HepG2 (cell line): ENCODE measurements at regions of chr16 and their contacts with region 1.

Region 1: DNA sequence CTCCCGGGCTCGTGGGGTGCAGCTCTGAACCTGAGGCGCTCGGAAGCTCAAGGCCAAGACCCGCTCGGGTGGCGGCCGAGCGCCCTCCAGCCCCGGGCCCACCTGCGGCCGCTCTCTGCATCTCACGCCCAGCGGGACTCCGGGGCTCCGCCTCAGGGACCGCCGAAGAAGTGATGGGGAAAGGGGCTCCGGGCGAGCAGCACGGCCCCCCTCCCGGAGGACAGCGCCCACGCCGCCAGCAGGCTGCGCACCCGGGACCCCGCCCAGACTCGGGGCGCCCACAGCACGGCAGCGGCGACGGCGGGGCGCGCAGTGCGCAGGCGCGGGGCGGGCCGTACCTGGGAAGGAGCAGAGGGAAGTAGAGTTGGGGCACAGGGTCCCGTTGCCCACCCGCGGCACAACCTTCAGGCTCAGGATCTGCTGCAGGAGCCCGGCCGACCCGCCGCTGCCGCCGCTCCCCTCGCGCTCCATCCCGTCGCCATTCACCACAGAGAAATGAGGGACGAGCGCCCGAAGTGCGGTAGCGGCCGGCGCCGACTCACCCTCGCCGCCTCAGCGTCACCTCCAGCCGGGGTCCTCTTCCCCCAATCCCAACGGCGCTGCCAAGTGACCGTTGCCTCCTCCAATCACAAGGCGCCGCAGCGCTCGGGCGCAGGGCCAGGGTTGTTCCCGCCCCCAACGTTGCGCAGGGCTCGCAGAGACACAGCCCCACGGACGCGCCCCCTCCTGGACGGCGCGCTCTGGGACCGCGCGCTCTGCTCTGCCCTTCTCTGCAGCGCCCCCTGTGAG is at the start of gene TMEM170A:
- DNase-seq: peak; percentile 98
- ATAC-seq: peak; percentile 94
- H3K4me3 ChIP-seq: peak within 1 kb of the TSS; percentile 86 to 91 (median 91)
- H3K27ac ChIP-seq: peak within 1 kb of the TSS; percentile 80
- H3K4me1 ChIP-seq: peaks cover 66% of the 10 kb centered on the region
- H3K27me3 ChIP-seq: no peaks in the 10 kb centered on the region
- CTCF ChIP-seq: peak; percentile 100
- EP300 ChIP-seq: peak; percentile 20 to 46; a peak in 2 of 4 replicates
- POLR2A ChIP-seq: peak; percentile 96 to 98
- RAD21 ChIP-seq: peak; percentile 96
- total RNA-seq, gene TMEM170A: 39.7 and 44.7 TPM in 2 replicates

Region 2: GRCh38 chr16:74695450-74696422 is 768.6 kb before region 1 on chr16:
- CTCF ChIA-PET with region 1: no interaction called
- POLR2A ChIA-PET with region 1: no interaction called
- in situ Hi-C with region 1: no loop called
- intact Hi-C with region 1: loop called (anchors 5 kb)
- DNase-seq: peak; percentile 96
- ATAC-seq: peak; percentile 95
- H3K4me3 ChIP-seq: peak overlapping the region; percentile 50 to 70 (median 55)
- H3K27ac ChIP-seq: peak overlapping the region; percentile 11
- H3K4me1 ChIP-seq: peaks cover 26% of the 10 kb centered on the region
- H3K27me3 ChIP-seq: no peaks in the 10 kb centered on the region; a peak in 1 of 5 replicates
- CTCF ChIP-seq: no peak
- EP300 ChIP-seq: no peak; a peak in 1 of 4 replicates
- POLR2A ChIP-seq: peak; percentile 81 to 96
- RAD21 ChIP-seq: peak; percentile 9; the same call in 1 of the 2 replicates

Region 3: GRCh38 chr16:75198135-75198600 is 266.2 kb before region 1 on chr16:
- CTCF ChIA-PET with region 1: interaction called, 32 read pairs
- POLR2A ChIA-PET with region 1: no interaction called
- in situ Hi-C with region 1: no loop called
- intact Hi-C with region 1: loop called (anchors 1 kb)
- DNase-seq: no peak
- ATAC-seq: peak; percentile 9; the same call in 1 of the 3 replicates
- H3K4me3 ChIP-seq: peak overlapping the region; percentile 5 to 64 (median 34); a peak in 4 of 6 replicates
- H3K27ac ChIP-seq: no peak overlapping the region
- H3K4me1 ChIP-seq: peaks cover 23% of the 10 kb centered on the region
- H3K27me3 ChIP-seq: peaks cover 11 to 51% of the 10 kb centered on the region in 2 experiments
- CTCF ChIP-seq: no peak
- EP300 ChIP-seq: no peak
- POLR2A ChIP-seq: no peak
- RAD21 ChIP-seq: no peak

Region 4: DNA sequence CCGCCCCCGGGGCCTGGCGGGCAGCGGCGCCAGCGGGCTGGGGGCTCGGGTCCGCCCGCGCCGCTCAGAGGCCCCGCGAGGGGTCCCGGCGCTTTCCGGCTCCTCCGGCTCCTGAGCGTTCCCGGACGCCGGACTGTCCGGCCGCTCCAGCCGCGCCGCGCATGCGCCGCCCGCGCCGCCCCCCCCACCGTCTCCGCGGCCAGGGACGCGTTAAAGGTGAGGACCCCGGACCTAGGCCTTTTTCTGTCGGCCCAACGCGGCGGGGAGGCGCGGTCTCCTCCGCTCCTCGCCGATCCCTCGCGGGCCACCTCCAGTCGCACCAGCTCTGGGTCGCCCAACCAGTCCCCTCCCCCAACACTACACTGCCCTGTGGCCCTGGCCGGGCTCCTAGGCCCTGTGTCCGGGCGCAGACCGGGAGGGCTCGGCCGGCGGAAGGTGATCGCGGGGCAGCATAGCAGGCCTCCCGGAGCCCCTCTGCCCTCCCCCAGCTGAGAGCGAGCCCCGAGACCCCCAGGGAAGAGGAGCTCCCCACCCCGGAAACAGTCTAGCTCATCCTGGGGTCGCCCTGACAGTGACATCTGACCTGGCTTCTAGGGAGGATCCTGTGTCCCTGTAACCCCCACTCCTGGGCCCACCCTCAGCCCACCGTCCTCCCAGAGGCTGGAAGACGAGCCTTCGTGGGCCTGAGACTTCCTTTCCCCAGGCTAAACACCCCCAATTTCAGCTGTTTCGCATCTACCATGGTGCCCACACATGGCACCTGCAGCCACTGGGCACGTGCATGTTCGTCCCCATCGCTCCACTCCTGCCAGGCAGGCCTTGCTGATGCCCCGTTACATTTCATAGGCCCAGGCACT is 198.3 kb before region 1 on chr16:
- CTCF ChIA-PET with region 1: no interaction called
- POLR2A ChIA-PET with region 1: no interaction called
- in situ Hi-C with region 1: no loop called
- intact Hi-C with region 1: loop called (anchors 5 kb)
- DNase-seq: peak; percentile 84
- ATAC-seq: peak; percentile 30
- H3K4me3 ChIP-seq: peak overlapping the region; percentile 92 to 99 (median 96)
- H3K27ac ChIP-seq: peak overlapping the region; percentile 75
- H3K4me1 ChIP-seq: peaks cover 69% of the 10 kb centered on the region
- H3K27me3 ChIP-seq: no peaks in the 10 kb centered on the region
- CTCF ChIP-seq: peak; percentile 57
- EP300 ChIP-seq: 0 out of 4 replicates have a peak, but pooled peaks of 1 of the 2 experiments have one; percentile 10
- POLR2A ChIP-seq: peak in 1 of 2 experiments; percentile 27; a peak in 1 of 4 replicates
- RAD21 ChIP-seq: peak; percentile 87

Region 5: GRCh38 chr16:75420987-75421819 is 43.1 kb before region 1 on chr16:
- CTCF ChIA-PET with region 1: interaction called, 4 read pairs
- POLR2A ChIA-PET with region 1: interaction called, 3 read pairs
- in situ Hi-C with region 1: no loop called
- intact Hi-C with region 1: loop called (anchors 1 kb)
- DNase-seq: peak; percentile 73
- ATAC-seq: peak; percentile 89
- H3K4me3 ChIP-seq: peak overlapping the region in 1 of 3 experiments; percentile 10; a peak in 1 of 6 replicates
- H3K27ac ChIP-seq: peak overlapping the region; percentile 49
- H3K4me1 ChIP-seq: peaks cover 85% of the 10 kb centered on the region
- H3K27me3 ChIP-seq: no peaks in the 10 kb centered on the region
- CTCF ChIP-seq: no peak
- EP300 ChIP-seq: no peak
- POLR2A ChIP-seq: peak in 1 of 2 experiments; percentile 67; a peak in 2 of 4 replicates
- RAD21 ChIP-seq: no peak

Region 6: DNA sequence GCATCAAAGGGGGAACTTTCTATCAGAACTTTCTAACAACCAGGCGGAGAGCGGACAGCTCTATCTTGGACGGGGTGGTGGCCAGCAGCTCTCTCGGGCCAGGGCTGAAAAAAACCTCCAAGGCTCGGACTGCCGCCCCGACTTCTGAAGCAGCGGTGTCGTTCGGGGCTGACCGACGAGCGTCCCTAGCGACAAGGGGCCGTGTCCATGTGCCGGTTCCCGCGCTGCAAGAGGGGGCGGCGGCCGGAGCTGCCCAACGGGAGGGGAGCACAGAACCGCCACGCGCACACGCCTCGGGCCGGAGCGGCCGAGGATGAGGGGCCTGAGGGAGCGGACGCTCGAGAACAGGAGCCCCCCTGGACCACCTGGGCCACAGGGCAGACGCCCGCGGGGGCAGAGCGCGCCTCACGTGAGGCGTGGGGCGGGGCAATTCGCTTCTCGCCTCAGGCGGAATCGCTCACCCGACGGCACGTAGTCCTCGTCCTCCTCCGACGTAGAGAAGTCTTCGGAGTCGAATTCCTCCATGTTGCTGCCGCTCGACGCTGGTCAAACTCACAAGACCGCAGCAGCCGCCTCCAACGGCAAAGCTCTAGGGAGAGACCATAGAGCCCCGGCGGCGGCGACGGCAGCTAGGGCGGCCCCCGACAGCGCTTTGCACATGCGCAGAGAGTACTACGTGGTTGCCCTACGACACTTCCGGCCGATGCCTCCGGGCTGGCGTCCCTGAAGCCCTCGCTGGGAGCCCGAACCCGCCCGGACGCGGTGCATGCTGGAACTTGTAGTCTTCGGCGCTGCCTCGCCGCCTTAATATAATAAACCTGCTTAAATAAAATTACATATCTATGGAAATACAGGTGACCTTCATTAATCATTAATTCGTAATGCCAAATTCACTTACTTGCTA is 31.2 kb before region 1 on chr16 and contains the start of gene CFDP1:
- CTCF ChIA-PET with region 1: interaction called, 14 read pairs
- POLR2A ChIA-PET with region 1: interaction called, 5 read pairs
- in situ Hi-C with region 1: no loop called
- intact Hi-C with region 1: loop called (anchors 1 kb)
- DNase-seq: peak; percentile 94
- ATAC-seq: peak; percentile 93
- H3K4me3 ChIP-seq: peak within 1 kb of the TSS; percentile 76 to 95 (median 78)
- H3K27ac ChIP-seq: peak within 1 kb of the TSS; percentile 94
- H3K4me1 ChIP-seq: peaks cover 58% of the 10 kb centered on the region
- H3K27me3 ChIP-seq: no peaks in the 10 kb centered on the region; a peak in 1 of 5 replicates
- CTCF ChIP-seq: peak; percentile 49
- EP300 ChIP-seq: peak in 1 of 2 experiments; percentile 11; a peak in 1 of 4 replicates
- POLR2A ChIP-seq: peak; percentile 81 to 88
- RAD21 ChIP-seq: peak; percentile 23; the same call in 1 of the 2 replicates
- total RNA-seq, gene CFDP1: 153 and 198 TPM in 2 replicates

Region 7: DNA sequence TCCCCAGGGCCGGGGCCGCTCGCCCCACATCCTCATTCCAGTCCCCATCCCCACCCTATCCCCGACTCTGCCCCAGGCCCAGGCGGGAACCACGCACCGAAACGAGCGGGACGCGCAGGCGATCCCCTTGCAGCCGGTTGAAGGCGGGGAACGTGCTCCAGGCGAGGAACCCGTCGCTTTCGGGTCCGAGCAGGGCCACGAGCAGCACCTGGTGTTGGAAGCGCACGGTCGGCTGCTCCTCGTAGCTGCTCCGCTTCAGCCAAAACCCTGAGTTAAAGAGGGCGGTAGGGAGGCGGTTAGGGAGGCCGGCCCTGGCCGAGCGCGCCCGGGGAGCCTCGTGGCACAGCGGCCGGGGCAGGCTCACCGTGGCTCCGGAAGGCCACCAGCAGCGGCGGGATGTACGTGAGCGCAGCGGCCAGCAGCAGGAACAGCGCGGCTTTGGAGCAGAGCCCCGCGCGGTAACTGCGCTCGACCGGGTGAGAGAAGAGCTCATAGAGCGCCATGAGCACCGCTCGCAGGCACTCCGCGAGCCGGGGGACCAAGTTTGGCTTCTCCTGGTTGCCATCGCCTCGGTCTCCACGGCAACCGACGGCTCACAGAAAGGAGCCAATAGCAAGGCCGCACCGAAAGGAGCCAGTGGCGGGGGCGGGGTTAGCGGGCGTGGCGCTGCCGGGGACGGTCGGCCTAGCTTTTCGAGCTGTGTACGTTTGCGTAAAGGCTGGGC is 91.5 kb after region 1 on chr16 and contains the start of gene TMEM231:
- CTCF ChIA-PET with region 1: interaction called, 3 read pairs
- POLR2A ChIA-PET with region 1: no interaction called
- in situ Hi-C with region 1: no loop called
- intact Hi-C with region 1: loop called (anchors 1 kb)
- DNase-seq: peak; percentile 91
- ATAC-seq: peak; percentile 94
- H3K4me3 ChIP-seq: peak within 1 kb of the TSS; percentile 68 to 85 (median 70)
- H3K27ac ChIP-seq: peak within 1 kb of the TSS; percentile 32
- H3K4me1 ChIP-seq: peaks cover 28% of the 10 kb centered on the region
- H3K27me3 ChIP-seq: peaks cover 0 to 12% of the 10 kb centered on the region in 2 experiments; a peak in 2 of 5 replicates
- CTCF ChIP-seq: no peak; the same call in none of the 2 replicates
- EP300 ChIP-seq: no peak
- POLR2A ChIP-seq: peak; percentile 28 to 31; a peak in 2 of 4 replicates
- RAD21 ChIP-seq: 0 out of 2 replicates have a peak, but pooled peaks have one; percentile 17
- total RNA-seq, gene TMEM231: 2.3 and 3.5 TPM in 2 replicates

Region 8: GRCh38 chr16:76732894-76733293 is 1268.6 kb after region 1 on chr16:
- CTCF ChIA-PET with region 1: no interaction called
- POLR2A ChIA-PET with region 1: no interaction called
- in situ Hi-C with region 1: no loop called
- intact Hi-C with region 1: no loop called
- DNase-seq: no peak
- ATAC-seq: no peak
- H3K4me3 ChIP-seq: no peak overlapping the region
- H3K27ac ChIP-seq: no peak overlapping the region
- H3K4me1 ChIP-seq: no peaks in the 10 kb centered on the region
- H3K27me3 ChIP-seq: no peaks in the 10 kb centered on the region
- CTCF ChIP-seq: no peak
- EP300 ChIP-seq: no peak
- POLR2A ChIP-seq: no peak
- RAD21 ChIP-seq: no peak